Keratinocyte (primary cell): ENCODE measurements at regions of chr9 and their contacts with region 1.

Region 1: DNA sequence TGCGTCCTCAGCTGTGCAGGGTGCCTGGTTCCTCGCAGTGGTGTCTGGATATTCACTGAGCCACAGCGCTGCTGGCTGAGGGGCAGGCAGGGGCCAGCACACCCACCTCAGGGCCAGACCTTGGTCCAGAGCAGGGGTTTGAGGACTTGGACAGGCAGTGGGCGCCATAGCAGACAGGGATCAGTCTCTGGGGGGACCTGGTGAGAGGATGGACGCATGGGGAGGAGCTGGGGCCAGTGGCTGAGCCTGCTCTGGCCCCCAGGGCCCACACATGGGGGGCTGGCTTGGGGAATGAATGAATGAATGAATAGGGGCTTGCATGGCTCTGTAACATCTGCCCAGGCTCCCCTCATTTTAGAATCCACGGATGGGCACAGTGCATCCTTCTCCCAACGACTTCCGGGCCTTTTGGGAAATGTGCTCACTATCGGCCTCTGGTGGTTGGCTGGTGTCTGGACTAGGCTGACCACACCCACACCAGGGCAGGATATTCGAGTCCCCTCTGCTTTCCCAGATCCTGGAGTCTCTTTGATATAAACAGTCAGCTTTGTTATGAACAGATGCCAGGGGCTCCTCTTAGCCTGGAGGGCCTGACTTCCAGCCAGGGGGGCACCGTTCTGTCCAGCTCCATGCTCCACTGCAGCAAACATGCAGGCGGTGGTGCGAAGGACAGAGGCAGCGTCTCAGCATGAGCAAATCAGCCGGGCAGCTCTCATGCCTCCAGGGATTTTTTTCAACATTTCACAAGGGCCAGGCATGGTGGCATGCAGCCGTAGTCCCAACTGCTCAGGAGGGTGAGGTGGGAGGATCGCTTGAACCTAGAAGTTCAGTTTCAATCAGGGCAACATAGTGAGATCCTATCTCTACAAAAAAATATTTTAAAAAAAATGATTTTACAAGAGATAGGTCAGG is 62.6 kb downstream of the NEK6 start:
- DNase-seq: no peak
- H3K4me3 ChIP-seq: no peak overlapping the region
- H3K27ac ChIP-seq: no peak overlapping the region
- H3K4me1 ChIP-seq: no peaks in the 10 kb centered on the region
- H3K27me3 ChIP-seq: no peaks in the 10 kb centered on the region
- CTCF ChIP-seq: peak; percentile 90 to 96 (median 95)

Region 2: GRCh38 chr9:124110307-124110915 is 209.9 kb before region 1 on chr9:
- dilution Hi-C with region 1: loop called (anchors 25 kb)
- DNase-seq: no peak
- H3K4me3 ChIP-seq: no peak overlapping the region
- H3K27ac ChIP-seq: no peak overlapping the region
- H3K4me1 ChIP-seq: no peaks in the 10 kb centered on the region
- H3K27me3 ChIP-seq: peaks cover 10% of the 10 kb centered on the region
- CTCF ChIP-seq: no peak

Region 3: DNA sequence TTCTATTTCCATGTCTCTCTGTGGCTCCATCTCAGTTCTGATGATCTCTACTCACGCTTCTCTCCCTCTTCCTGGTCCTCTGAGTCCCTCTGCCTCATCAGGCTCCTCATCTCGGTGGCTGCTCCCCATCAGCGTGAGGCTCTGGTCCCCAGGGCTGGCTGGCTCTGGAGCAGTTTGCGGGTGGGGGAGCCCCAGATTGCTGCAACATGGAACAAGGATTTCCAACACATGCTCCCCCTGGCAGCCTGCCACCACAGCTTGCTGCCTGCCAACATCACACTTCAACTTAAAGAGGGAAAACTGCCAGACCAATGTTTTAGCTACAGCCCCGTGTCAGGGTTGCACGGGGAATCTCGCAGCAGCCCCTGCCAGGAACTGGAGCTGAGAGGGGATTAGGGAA is 139.8 kb before region 1 on chr9:
- dilution Hi-C with region 1: no loop called
- DNase-seq: no peak
- H3K4me3 ChIP-seq: no peak overlapping the region
- H3K27ac ChIP-seq: no peak overlapping the region
- H3K4me1 ChIP-seq: no peaks in the 10 kb centered on the region
- H3K27me3 ChIP-seq: peaks cover 13% of the 10 kb centered on the region
- CTCF ChIP-seq: no peak